AG04449 (cell line): ENCODE measurements at regions of chr6 and their contacts with region 1.

Region 1: DNA sequence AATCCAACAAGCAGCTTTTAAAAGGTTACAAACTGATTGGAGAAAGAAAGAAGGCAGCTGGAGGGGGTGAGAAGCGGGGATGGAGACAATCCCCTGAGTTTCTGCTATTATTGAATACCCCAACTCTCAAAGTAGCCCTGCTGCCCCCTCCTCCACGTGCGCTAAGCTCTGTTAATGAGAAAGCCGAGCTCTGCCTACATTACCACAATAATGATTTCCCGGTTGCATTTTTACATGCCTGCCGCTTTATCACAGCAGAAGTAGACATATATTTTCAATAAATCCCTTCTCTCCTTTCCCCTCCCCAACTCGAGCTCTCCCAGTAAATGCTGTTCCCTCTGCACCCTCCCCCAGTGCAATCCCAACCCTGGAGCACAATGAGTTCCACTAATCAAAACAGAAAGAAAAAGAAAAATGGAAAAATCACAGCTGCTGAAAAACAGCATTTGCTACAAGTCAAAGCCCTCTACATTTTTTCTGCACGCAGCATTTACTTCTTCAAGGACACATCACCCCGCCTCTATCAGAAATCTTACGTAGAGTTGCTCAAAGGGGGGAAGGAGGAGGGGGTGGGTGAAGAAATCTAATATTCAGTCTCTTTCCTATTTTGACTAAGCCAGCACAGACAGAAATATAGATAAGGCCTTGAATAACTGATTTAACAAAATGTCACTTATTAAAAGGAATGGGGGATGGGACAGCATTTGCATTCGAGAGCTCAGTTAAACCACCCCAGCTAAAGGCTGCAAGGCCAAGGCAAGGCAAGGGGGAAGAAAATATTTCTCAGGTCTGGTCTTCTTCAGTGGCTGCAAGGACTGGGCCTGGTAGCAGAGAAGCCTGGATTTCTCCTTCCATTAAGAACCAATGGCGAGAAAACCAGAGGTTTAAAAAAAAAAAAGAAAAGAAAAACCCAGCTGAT is 10.7 kb downstream of the TRERF1 start:
- DNase-seq: no peak
- H3K4me3 ChIP-seq: peak overlapping the region; percentile 24
- CTCF ChIP-seq: no peak

Region 2: DNA sequence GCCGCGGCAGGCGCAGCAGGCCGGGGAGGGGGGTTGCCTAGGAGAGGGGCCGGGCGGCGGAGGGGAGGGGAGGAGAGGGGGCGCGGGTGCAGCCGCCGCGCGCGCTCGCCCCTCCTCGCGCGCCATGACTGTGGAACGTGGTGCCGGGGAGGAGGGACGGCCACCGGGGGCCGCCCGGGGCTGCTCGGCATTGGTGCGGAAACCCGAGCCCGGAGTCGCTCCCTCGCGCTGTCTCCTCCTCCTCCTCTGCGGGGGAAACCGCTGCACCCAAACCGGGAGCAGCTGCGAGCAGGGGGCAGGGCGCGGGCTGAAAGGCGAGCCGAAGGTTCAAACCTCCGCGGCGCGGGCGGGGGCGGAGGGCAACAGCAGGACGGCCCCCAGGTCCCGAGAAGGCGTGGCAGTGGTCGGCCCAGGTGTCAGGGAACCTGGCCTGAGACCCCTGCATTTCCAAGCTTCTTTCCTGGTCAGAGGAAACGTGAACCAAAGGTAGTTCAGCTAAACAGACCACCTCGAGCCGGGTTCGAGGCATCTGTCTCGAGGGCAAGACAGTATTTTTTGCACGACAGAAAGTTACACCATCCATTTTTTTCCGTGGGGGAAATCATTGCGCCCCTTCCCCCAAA is 12.1 kb after region 1 on chr6:
- CTCF ChIA-PET with region 1: interaction called, 4 read pairs
- POLR2A ChIA-PET with region 1: interaction called, 10 read pairs
- DNase-seq: no peak
- H3K4me3 ChIP-seq: peak overlapping the region; percentile 74
- CTCF ChIP-seq: peak; percentile 10

Region 3: DNA sequence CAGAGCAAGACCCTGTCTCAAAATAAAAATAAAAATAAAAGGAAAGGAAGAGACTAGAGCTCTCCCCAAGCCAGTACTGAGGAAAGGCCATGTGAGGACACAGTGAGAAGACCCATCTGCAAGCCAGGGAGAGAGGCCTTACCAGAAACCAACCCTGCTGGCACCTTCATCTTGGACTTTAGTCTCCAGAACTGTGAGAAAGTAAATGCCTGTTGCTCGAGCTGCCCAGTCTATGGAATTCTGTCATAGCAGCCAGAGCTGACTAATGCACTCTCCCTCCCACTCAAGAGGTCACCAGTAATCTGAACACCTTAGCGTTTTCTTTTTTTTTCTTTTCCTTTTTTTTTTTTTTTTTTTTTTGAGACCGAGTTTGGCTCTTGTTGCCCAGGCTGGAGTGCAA is 288.7 kb after region 1 on chr6:
- CTCF ChIA-PET with region 1: no interaction called
- POLR2A ChIA-PET with region 1: no interaction called
- DNase-seq: no peak
- H3K4me3 ChIP-seq: no peak overlapping the region
- CTCF ChIP-seq: no peak